Right ventricle myocardium superior (tissue), 1 donor: ENCODE measurements at regions of chr5 and their contacts with region 1.

Region 1: GRCh38 chr5:56481428-56482357 is 248.6 kb upstream of the ANKRD55 start:
- DNase-seq: peak; percentile 72
- ATAC-seq: peak; percentile 79

Region 2: GRCh38 chr5:56814963-56815658 is 333.4 kb after region 1 on chr5 and contains the start of gene MAP3K1:
- intact Hi-C with region 1: loop called (anchors 10 kb)
- DNase-seq: peak; percentile 89
- ATAC-seq: peak; percentile 91
- total RNA-seq, gene MAP3K1: 5.6 TPM